Transverse colon (tissue), 4 donors: ENCODE measurements at regions of chr9 and their contacts with region 1.

Region 1: GRCh38 chr9:80951675-80952074 is 737.7 kb downstream of the TLE1 start:
- DNase-seq: no peak
- H3K4me3 ChIP-seq: no peak overlapping the region
- H3K27ac ChIP-seq: no peak overlapping the region
- H3K4me1 ChIP-seq: no peaks in the 10 kb centered on the region
- H3K27me3 ChIP-seq: no peaks in the 10 kb centered on the region
- CTCF ChIP-seq: no peak
- EP300 ChIP-seq: no peak
- POLR2A ChIP-seq: no peak

Region 2: GRCh38 chr9:82490019-82490499 is 1538.4 kb after region 1 on chr9:
- in situ Hi-C with region 1: no loop called
- intact Hi-C with region 1: loop called (anchors 5 kb)
- DNase-seq: no peak
- H3K4me3 ChIP-seq: no peak overlapping the region
- H3K27ac ChIP-seq: peak overlapping the region in 1 of 4 donors; percentile 1
- H3K4me1 ChIP-seq: peaks cover 0 to 12% (median 4%) of the 10 kb centered on the region in 4 donors
- H3K27me3 ChIP-seq: no peaks in the 10 kb centered on the region
- CTCF ChIP-seq: no peak
- EP300 ChIP-seq: no peak
- POLR2A ChIP-seq: no peak